ENCODE measurements at regions of chr2 and their contacts with region 1.

Region 1: GRCh38 chr2:96856776-96857673 is 791 bp downstream of the ANKRD39 start:
- DNase-seq: peak; percentile 47
- ATAC-seq: peak; percentile 30
- H3K4me3 ChIP-seq: peak overlapping the region; percentile 73 to 84 (median 75)
- H3K27ac ChIP-seq: peak overlapping the region; percentile 52
- H3K4me1 ChIP-seq: peaks cover 54% of the 10 kb centered on the region
- H3K27me3 ChIP-seq: no peaks in the 10 kb centered on the region; a peak in 1 of 5 replicates
- CTCF ChIP-seq: no peak
- EP300 ChIP-seq: no peak
- POLR2A ChIP-seq: peak in 1 of 2 experiments; percentile 72; a peak in 2 of 4 replicates
- RAD21 ChIP-seq: no peak

Region 2: GRCh38 chr2:96145036-96145847 is 711.8 kb before region 1 on chr2 and contains the start of gene DUSP2:
- CTCF ChIA-PET with region 1: no interaction called
- POLR2A ChIA-PET with region 1: no interaction called
- in situ Hi-C with region 1: no loop called
- intact Hi-C with region 1: no loop called
- DNase-seq: no peak
- ATAC-seq: no peak
- H3K4me3 ChIP-seq: peak within 1 kb of the TSS in 1 of 3 experiments; percentile 17; a peak in 1 of 6 replicates
- H3K27ac ChIP-seq: no peak within 1 kb of the TSS
- H3K4me1 ChIP-seq: peaks cover 15% of the 10 kb centered on the region
- H3K27me3 ChIP-seq: peaks cover 11 to 67% of the 10 kb centered on the region in 2 experiments; a peak in 4 of 5 replicates
- CTCF ChIP-seq: no peak
- EP300 ChIP-seq: no peak
- POLR2A ChIP-seq: no peak
- RAD21 ChIP-seq: no peak
- total RNA-seq, gene DUSP2: not detected in 2 replicates

Region 3: DNA sequence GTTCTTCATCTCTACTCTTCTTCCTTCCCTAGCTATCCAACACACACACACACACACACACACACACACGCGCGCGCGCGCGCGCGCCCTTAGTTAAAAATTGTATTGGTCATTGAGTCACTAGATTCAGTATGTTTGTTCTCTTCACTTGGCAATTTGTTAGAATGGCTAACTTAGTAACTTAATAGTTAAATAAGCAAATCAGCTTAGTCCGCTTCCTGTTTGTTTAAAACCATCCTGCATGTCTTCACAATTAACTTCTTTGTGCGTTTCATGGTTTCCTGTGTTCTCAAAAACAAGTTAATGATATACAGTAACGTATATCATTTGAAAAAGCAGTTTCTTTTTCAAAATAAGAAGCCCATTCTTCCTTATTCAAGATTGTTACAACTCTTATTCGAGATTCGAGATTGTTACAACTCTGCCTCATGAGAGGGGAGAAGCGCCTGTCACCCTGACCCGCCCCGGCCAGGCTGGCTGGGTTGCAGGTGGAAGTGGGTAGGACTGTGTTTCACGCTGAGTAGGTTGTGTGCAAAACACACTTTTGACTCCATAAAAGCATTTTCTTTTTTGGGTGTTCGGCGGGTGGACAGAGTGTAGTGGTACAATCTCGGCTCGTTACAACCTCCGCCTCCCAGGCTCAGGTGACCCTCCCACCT is 50.4 kb before region 1 on chr2:
- CTCF ChIA-PET with region 1: no interaction called
- POLR2A ChIA-PET with region 1: interaction called, 12 read pairs
- in situ Hi-C with region 1: no loop called
- intact Hi-C with region 1: no loop called
- DNase-seq: peak; percentile 58
- ATAC-seq: no peak
- H3K4me3 ChIP-seq: no peak overlapping the region
- H3K27ac ChIP-seq: peak overlapping the region; percentile 50
- H3K4me1 ChIP-seq: peaks cover 59% of the 10 kb centered on the region
- H3K27me3 ChIP-seq: no peaks in the 10 kb centered on the region
- CTCF ChIP-seq: no peak
- EP300 ChIP-seq: no peak
- POLR2A ChIP-seq: no peak
- RAD21 ChIP-seq: no peak

Region 4: DNA sequence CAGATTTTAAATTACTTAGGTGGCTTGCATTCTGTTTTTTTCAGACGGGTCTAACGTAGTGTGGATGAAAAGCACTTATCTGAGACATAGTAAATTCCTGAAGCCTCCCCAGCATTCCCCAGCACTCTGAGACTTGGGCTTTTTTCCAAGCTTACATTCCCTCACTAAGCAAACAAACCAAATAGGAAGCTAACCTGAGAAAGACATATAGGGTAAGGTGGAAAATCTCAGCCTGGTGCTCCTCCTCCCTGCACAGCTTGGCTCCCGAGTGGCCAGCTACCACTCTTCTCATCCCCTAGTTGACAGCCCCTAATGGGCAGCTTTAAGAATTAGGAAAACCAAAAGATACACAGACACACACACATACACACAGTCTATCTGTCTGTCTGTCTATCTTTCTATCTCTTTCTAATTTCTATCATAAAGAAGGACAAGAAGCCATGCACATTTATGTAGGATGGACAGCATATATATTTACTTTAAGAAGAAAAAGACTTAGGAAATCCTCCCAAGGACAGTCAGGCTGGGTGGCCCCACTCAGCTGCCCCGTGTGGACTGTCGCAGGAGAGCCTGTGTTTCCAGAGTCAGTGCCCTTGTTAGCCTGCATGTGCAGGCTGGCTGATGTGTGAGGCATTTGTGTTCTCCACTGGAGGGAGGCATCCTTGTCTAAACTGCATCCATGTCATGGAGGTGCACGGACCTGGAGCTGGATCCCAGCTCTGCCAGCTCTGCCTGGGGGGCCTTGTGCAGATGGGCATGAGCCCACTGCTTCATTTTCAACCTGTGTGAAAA is 32.8 kb before region 1 on chr2:
- CTCF ChIA-PET with region 1: no interaction called
- POLR2A ChIA-PET with region 1: interaction called, 99 read pairs
- in situ Hi-C with region 1: no loop called
- intact Hi-C with region 1: loop called (anchors 2 kb)
- DNase-seq: peak; percentile 77
- ATAC-seq: peak; percentile 58
- H3K4me3 ChIP-seq: no peak overlapping the region
- H3K27ac ChIP-seq: peak overlapping the region; percentile 26
- H3K4me1 ChIP-seq: peaks cover 53% of the 10 kb centered on the region
- H3K27me3 ChIP-seq: no peaks in the 10 kb centered on the region
- CTCF ChIP-seq: no peak
- EP300 ChIP-seq: no peak
- POLR2A ChIP-seq: no peak
- RAD21 ChIP-seq: peak; percentile 39; the same call in 1 of the 2 replicates

Region 5: DNA sequence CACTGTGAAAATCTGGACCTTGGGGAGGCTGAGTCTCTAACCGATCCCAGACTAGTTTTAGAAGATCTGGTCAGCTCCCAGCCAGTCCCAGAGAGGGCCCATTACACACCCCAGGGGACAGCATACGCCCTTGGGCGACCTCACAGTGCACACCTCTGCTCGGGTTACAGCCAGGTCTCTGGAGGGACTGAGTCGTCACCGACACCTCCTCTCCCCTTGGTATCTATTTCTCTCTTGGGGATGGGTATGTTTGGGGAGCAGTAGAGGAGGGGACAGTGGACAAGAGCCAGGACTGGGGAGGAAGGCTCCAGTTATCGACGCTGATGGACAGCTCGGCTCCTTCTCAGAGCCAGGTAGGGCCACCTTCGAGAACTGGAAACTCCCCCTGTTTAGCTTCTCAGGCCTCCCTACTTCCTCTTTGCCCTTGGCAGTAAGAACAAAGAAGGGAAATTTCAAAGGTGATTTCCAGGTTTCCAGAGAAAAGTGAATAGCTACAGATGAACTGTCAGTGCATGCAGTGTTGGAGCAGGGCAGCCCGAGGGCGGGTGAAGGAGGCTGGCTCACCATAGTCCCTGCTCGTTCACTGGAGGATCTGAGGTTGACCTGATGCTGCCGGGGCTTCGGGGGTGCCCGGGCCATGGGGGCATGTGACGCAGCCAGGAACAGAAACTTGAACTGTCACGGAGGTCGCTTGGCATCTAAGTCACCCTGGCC is 17.2 kb after region 1 on chr2:
- CTCF ChIA-PET with region 1: interaction called, 17 read pairs
- POLR2A ChIA-PET with region 1: interaction called, 152 read pairs
- in situ Hi-C with region 1: no loop called
- intact Hi-C with region 1: loop called (anchors 1 kb)
- DNase-seq: no peak
- ATAC-seq: no peak
- H3K4me3 ChIP-seq: no peak overlapping the region
- H3K27ac ChIP-seq: no peak overlapping the region
- H3K4me1 ChIP-seq: peaks cover 18% of the 10 kb centered on the region
- H3K27me3 ChIP-seq: peaks cover 31 to 76% of the 10 kb centered on the region in 2 experiments
- CTCF ChIP-seq: no peak
- EP300 ChIP-seq: no peak
- POLR2A ChIP-seq: no peak
- RAD21 ChIP-seq: no peak

Region 6: GRCh38 chr2:96951093-96951654 is 94.1 kb after region 1 on chr2:
- CTCF ChIA-PET with region 1: interaction called, 29 read pairs
- POLR2A ChIA-PET with region 1: interaction called, 19 read pairs
- in situ Hi-C with region 1: loop called (anchors 5 kb)
- intact Hi-C with region 1: loop called (anchors 1 kb)
- DNase-seq: peak; percentile 64
- ATAC-seq: peak; percentile 96
- H3K4me3 ChIP-seq: peak overlapping the region in 1 of 3 experiments; percentile 8; a peak in 1 of 6 replicates
- H3K27ac ChIP-seq: no peak overlapping the region
- H3K4me1 ChIP-seq: peaks cover 30% of the 10 kb centered on the region
- H3K27me3 ChIP-seq: peaks cover 13 to 78% of the 10 kb centered on the region in 2 experiments; a peak in 4 of 5 replicates
- CTCF ChIP-seq: peak; percentile 100
- EP300 ChIP-seq: no peak
- POLR2A ChIP-seq: no peak
- RAD21 ChIP-seq: peak; percentile 95

Measured in HepG2 (cell line).